Motor neuron (in vitro differentiated cells): ENCODE measurements at regions of chr1 and their contacts with region 1.

Region 1: GRCh38 chr1:47262787-47263413 is 30.9 kb upstream of the TAL1 start:
- ATAC-seq: peak in 3 of 8 experiments; percentile 33 to 46 (median 35)
- H3K4me3 ChIP-seq: no peak overlapping the region
- H3K27ac ChIP-seq: no peak overlapping the region
- H3K4me1 ChIP-seq: no peaks in the 10 kb centered on the region

Region 2: DNA sequence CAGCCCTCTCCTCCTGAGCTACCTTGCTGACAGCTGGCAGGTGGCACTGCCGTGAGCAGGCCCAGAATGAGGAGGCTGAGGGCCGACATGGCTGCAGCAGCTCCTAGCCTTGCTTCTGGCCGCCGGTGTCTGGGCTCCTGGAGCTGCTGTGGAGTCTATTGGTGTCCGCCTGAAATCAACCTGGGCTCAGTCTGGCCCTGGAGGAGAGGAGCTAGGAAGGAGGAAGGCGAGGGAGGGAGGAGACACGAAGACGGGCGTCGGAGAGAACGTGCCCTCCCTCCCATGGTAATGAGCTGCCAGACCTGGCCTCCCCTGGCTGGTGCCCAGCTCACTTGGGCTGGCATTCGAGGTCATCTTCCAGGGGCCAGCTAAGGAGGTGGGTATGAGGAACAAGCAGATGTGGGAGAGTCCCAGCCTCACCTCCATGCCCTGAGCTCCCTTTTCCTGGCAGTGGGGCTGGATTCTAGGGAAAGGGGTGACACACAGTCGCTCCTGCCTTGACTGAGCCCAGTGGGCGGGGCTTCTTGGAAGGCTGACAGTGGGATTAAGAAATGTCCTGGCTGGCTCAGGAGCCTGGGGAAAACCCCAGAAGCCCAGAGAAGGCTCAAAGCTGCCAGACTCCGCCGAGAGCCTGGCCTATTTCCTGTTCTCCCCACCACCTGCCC is 72.9 kb before region 1 on chr1 and contains the start of gene PDZK1IP1:
- in situ Hi-C with region 1: loop called in 1 of 9 experiments (anchors 10 kb)
- ATAC-seq: peak in 3 of 8 experiments; percentile 77 to 85 (median 78)
- H3K4me3 ChIP-seq: no peak within 1 kb of the TSS
- H3K27ac ChIP-seq: no peak within 1 kb of the TSS
- H3K4me1 ChIP-seq: peaks cover 0 to 8% of the 10 kb centered on the region in 2 donors
- total RNA-seq, gene PDZK1IP1: 0.71 to 3.2 (median 1.0) TPM in 3 of 8 experiments, not detected in the others